Cardiac septum (tissue), 1 donor: ENCODE measurements at regions of chr18 and their contacts with region 1.

Region 1: DNA sequence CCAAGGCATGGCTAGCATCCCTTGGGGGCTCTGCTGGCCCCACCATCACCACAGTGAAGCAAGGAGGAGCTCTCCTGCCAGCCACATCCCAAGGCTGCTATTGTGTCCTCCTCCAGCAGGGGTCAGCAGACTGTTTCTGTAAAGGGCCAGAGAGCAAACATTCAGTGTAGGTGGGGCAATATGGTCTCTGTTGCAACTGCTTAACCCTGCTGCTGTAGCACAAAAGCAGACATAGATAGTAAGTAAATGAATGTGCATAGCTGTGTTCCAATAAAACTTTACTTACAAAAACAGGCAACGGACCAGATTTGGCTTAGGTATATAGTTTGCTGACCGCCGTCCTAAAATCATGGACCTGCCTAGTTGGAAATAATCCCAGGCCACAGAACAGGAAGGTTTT is 36.4 kb upstream of the ZBTB7C start:
- DNase-seq: no peak

Region 2: GRCh38 chr18:47772374-47773248 is 672.9 kb before region 1 on chr18:
- intact Hi-C with region 1: loop called (anchors 5 kb)
- DNase-seq: no peak

Region 3: GRCh38 chr18:48030616-48031480 is 414.7 kb before region 1 on chr18:
- intact Hi-C with region 1: loop called (anchors 2 kb)
- DNase-seq: peak; percentile 57

Region 4: GRCh38 chr18:48222118-48222517 is 223.4 kb before region 1 on chr18:
- intact Hi-C with region 1: loop called (anchors 10 kb)
- DNase-seq: no peak

Region 5: GRCh38 chr18:48342125-48342524 is 103.4 kb before region 1 on chr18:
- intact Hi-C with region 1: loop called (anchors 5 kb)
- DNase-seq: no peak

Region 6: GRCh38 chr18:48409591-48410094 is 35.9 kb before region 1 on chr18:
- intact Hi-C with region 1: loop called (anchors 5 kb)
- DNase-seq: no peak

Region 7: DNA sequence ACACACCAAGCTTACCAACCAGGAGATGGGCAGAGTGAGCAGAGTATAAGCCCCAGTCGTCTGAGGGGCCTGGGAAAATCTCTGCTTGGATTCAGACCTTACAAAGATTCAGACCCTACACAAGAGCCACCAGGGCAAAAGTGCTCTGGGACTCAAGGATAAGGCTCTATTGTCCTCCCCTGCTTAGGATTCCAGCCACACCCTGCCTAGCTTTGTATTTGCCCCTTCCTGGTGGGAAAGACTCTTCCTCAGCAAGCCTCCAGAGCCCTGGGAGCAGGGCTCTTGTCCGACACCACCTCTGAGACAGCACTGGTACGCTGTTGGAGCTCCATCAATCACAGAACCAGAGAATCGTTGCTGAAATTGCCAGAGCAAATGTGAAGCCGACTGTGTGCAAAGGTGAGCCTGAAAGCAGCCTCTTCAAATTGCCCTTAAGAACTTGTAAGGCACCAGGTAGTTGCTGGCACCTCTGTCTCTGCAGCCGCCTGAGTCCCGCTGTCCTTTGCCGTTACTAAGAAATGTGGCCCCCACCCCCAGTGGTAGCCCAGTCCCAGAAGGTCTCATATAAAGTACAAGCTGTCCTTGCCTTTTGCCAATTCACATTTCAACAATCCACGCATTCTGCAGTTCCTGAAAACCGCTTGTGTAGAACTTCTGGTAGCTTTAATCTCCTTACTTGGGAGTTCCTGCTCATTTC is 242.0 kb after region 1 on chr18:
- intact Hi-C with region 1: no loop called
- DNase-seq: no peak

Region 8: DNA sequence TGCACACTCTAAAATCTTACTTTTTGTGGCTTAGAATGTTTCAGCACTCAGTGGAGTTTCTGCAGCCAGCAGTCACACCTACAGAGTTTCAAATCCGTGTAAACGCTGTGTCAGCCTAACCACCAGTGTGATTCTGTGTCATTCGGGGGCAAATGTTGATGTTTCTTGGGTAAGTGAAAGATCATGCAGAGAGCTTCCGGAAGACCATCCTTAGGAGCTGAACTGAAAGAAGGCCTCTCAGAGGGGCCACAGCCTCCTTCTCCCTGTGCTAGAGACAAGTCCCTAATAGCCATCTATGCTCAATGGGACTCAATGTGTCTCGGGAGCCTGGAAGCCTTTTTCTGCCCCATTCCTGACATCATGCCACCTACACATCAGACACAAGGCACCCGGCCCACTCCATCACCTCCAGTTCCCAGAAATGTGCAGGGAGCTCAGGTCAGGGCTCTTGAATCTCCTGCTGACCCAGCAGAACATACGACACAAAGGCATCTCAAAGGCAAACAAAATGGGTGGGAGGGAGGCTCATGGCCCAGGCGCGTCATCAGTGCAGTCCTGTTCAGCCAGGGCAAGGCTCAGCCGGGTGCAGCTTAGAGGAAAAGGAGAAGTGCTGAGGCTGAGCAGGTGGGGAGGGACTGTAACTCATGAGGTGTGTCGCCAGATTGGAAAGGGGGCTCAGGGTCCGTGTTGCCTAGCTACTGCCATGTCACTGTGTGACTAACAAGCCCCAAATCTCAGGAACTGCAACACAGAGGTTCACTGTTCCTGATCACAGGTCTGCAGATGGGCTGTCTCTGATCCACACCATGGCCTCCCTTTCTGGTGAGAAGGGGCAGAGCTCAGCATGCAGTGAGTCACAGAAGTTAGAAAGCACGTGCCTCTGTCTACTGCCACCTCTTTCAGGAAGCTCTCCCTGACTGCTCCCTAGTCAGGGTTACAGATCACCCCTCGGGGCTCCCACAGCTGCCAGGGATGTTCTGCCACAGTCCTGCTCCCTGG is 423.2 kb after region 1 on chr18:
- intact Hi-C with region 1: no loop called
- DNase-seq: no peak